ENCODE measurements at regions of chr14 and their contacts with region 1.

Region 1: DNA sequence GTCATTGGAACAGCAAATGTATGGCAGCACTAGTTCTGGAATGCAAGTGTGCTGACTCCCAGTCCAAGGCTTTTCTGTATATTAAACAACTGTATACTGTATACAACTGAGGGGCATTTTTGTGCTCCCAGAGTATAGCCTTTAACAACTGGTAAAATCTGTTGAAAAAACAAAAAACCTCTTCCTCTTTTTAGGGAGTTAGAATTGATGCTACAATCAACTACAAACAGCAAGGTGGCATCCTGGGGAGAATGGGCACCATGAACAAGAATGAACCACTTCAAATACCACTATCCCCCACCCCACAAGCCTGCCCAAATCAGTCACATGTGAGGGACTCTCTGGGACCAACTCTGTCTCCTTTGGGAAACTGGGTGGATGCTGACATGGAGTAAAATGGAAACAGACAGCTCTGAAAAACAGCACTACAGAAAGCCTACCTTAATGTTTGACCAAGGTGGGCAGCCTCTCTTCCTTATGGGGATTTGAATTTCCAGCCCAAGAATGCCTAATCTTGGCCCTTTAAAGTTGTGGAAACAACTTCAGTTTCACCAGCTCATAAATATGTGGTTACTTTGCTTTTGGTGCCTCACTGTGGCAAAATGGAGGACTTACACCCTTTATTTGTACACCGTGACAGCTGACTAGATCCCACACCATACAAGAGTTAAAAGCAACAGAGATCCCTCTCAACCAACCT is 7.5 kb downstream of the VTI1B start:
- DNase-seq: peak; percentile 59
- H3K4me3 Mint-ChIP-seq: no peak overlapping the region
- H3K27ac Mint-ChIP-seq: no peak overlapping the region
- H3K4me1 Mint-ChIP-seq: peaks cover 35% of the 10 kb centered on the region
- H3K27me3 Mint-ChIP-seq: no peaks in the 10 kb centered on the region

Region 2: DNA sequence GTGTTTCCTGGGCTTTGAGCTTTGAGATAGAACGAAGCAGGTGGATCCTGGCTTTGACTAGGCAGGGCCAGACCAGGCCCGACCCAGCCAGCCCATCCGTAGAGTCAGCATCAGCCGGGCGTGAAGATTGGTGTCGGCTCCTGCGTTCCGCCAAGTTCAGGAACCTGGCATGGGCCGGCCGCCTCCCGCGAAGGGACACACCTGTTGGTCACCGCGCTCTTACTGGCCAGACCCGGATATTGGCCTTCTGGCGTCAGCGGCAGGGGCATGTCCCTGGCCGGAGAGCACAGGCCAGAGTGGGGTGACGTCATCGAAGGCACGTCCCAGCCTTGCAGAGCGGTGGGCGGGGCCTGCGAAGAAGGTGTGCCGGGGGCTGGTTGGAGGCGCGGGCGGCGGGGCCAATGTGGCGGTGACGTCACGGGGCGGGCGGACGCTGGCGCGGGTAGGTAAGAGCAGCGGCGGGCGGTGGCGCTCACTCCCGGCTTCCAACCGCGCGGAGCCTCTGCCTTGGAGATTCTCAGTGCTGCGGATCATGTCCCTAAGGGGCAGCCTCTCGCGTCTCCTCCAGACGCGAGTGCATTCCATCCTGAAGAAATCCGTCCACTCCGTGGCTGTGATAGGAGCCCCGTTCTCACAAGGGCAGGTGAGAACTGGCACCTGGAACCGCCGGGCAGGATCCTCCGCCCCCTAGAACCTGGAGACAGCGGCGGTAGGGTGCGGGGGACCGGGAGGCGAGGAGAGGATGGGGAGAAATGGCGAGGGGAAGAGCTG is 47.3 kb before region 1 on chr14 and contains the start of gene ARG2:
- CTCF ChIA-PET with region 1: interaction called, 11 read pairs
- POLR2A ChIA-PET with region 1: interaction called, 3 read pairs
- DNase-seq: peak; percentile 96
- H3K4me3 Mint-ChIP-seq: peak within 1 kb of the TSS; percentile 75
- H3K27ac Mint-ChIP-seq: peak within 1 kb of the TSS; percentile 84
- H3K4me1 Mint-ChIP-seq: peaks cover 33% of the 10 kb centered on the region
- H3K27me3 Mint-ChIP-seq: peaks cover 14% of the 10 kb centered on the region
- total RNA-seq, gene ARG2: 1.0 to 1.6 TPM

Measured in activated CD4-positive, alpha-beta T cell treated with anti-CD3 and anti-CD28 coated beads, Interleukin-2, amount 10 ng/mL, durations not matched to agents 7 days and 5 days (primary cell).